MCF 10A (cell line): ENCODE measurements at regions of chr17 and their contacts with region 1.

Region 1: GRCh38 chr17:77420804-77421629 is 280.2 kb downstream of the SEC14L1 start:
- DNase-seq: peak; percentile 82
- H3K4me3 Mint-ChIP-seq: peak overlapping the region; percentile 25
- H3K27ac Mint-ChIP-seq: peak overlapping the region; percentile 22
- H3K4me1 Mint-ChIP-seq: peaks cover 34% of the 10 kb centered on the region
- H3K27me3 Mint-ChIP-seq: no peaks in the 10 kb centered on the region
- CTCF ChIP-seq: no peak

Region 2: GRCh38 chr17:77319211-77320043 is 101.6 kb before region 1 on chr17:
- CTCF ChIA-PET with region 1: interaction called, 3 read pairs
- POLR2A ChIA-PET with region 1: interaction called, 15 read pairs
- intact Hi-C with region 1: no loop called
- DNase-seq: peak; percentile 90
- H3K4me3 Mint-ChIP-seq: peak overlapping the region; percentile 88
- H3K27ac Mint-ChIP-seq: peak overlapping the region; percentile 89
- H3K4me1 Mint-ChIP-seq: peaks cover 46% of the 10 kb centered on the region
- H3K27me3 Mint-ChIP-seq: no peaks in the 10 kb centered on the region
- CTCF ChIP-seq: no peak

Region 3: DNA sequence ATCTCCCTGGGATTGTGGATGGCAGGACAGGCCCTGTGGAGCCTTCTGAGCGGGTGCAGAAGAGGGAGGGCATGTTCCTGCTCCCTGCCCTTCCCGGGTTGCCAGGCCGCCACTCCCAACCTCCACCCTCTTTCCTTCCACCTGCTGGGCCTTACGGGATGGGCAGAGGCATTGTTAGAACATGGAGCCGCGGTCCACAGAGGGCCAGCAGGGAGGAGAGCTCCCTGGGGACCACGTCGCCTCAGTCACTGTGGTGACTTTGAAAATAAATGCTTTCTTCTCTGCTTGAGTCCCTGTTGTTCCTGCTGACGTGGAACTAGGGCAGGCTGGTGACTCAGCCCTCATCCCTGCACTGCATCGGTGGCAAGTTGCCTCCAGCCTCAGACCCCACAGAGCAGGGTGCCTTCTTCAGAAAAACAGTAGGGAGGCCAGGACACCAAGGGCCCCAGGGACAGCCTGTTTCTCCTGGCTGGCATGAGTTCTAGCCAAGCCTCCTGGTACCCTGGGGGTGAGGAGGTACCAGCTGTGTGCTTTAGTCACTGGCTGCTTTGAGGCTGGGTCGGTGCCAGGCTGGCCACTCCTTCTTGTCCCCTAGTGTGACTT is 55.3 kb before region 1 on chr17:
- CTCF ChIA-PET with region 1: no interaction called
- POLR2A ChIA-PET with region 1: interaction called, 18 read pairs
- intact Hi-C with region 1: no loop called
- DNase-seq: peak; percentile 77
- H3K4me3 Mint-ChIP-seq: peak overlapping the region; percentile 54
- H3K27ac Mint-ChIP-seq: peak overlapping the region; percentile 97
- H3K4me1 Mint-ChIP-seq: peaks cover 52% of the 10 kb centered on the region
- H3K27me3 Mint-ChIP-seq: no peaks in the 10 kb centered on the region
- CTCF ChIP-seq: no peak

Region 4: GRCh38 chr17:77400445-77400870 is 20.6 kb before region 1 on chr17:
- CTCF ChIA-PET with region 1: no interaction called
- POLR2A ChIA-PET with region 1: no interaction called
- intact Hi-C with region 1: no loop called
- DNase-seq: no peak
- H3K4me3 Mint-ChIP-seq: no peak overlapping the region
- H3K27ac Mint-ChIP-seq: peak overlapping the region; percentile 75
- H3K4me1 Mint-ChIP-seq: peaks cover 24% of the 10 kb centered on the region
- H3K27me3 Mint-ChIP-seq: no peaks in the 10 kb centered on the region
- CTCF ChIP-seq: no peak

Region 5: GRCh38 chr17:77471984-77472461 is 51.0 kb after region 1 on chr17:
- CTCF ChIA-PET with region 1: no interaction called
- POLR2A ChIA-PET with region 1: interaction called, 33 read pairs
- intact Hi-C with region 1: no loop called
- DNase-seq: peak; percentile 92
- H3K4me3 Mint-ChIP-seq: peak overlapping the region; percentile 30
- H3K27ac Mint-ChIP-seq: peak overlapping the region; percentile 76
- H3K4me1 Mint-ChIP-seq: peaks cover 71% of the 10 kb centered on the region
- H3K27me3 Mint-ChIP-seq: no peaks in the 10 kb centered on the region
- CTCF ChIP-seq: no peak

Region 6: DNA sequence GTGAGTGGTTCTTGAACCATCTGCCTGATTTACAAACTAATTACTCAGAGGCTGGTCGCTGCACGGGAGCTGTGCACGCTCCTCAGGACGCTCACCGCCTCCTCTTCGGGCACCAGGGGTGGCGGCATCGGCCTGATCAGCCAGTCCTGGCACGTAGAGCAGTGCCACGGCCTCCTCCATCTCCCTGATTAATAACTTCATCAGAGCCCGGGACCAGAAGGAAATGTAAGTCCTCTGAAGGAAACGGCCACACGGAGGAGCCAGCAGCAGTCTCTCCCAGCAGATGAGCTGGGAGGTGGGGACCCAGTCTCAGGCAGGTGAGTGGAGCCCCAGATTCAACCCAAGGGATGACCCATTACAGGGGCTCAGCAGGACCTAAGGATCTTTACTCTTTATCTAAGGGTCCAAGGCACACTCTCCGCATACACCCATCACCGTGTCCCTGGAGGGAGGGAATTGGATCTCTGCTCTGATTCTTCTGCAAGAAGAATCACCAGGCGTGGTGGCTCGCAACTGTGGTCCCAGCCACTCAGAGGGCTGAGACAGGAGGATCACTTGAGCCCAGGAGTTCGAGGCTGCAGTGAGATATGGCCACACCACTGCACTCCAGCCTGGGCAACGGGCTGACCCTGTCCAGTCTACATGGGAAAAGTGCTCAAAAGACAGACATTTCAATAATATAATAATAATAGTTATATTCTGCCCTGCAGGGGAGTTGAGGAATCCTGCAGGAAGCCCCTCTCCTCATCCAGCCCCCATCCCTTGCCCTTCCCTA is 86.3 kb after region 1 on chr17:
- CTCF ChIA-PET with region 1: no interaction called
- POLR2A ChIA-PET with region 1: no interaction called
- intact Hi-C with region 1: no loop called
- DNase-seq: no peak
- H3K4me3 Mint-ChIP-seq: no peak overlapping the region
- H3K27ac Mint-ChIP-seq: no peak overlapping the region
- H3K4me1 Mint-ChIP-seq: no peaks in the 10 kb centered on the region
- H3K27me3 Mint-ChIP-seq: no peaks in the 10 kb centered on the region
- CTCF ChIP-seq: no peak